ENCODE measurements at regions of chr20 and their contacts with region 1.

Region 1: DNA sequence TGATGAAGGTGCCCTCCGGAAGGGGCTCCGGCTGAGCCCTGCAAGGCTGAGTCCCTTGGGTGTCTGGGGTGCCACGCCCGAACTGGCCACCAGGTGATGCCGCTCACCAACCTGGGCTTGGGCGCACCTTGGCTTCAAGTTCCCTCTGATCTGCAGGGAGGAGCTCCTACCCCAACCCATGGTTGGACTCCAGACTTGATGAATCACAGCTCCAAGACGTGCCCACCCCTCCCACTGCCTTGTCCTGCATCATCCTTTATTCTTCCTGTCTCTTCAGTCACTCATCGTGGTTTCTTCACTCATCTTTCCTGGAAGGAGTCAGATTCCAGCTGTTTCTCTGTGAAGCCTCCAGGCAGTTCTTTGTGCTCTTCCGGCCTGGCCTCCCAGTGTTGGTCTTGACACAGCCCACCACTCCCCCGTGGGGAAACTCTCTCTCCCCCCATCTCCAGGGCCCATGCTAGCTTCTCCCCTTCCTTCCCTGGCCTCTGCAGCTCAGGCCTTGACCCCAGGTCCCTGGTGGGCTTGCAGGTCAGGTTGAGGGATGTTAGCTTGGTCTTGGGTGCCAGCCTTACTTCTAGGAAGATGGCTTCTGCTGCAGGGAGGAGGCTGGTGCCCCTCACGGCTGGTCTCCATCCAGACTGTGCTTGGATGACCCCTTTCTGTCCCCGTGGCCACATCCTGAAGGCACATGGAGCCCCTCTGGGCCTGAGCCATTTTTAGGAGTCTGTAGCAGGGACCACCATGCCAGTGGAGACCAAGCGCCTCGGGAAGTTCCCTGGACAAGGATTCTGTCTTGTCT is 2.6 kb upstream of the ZBP1 start:
- DNase-seq: peak; percentile 65 to 85 (median 74)
- ATAC-seq: peak; percentile 53
- H3K4me3 ChIP-seq: no peak overlapping the region
- H3K4me3 Mint-ChIP-seq: peak overlapping the region; percentile 87
- H3K27ac ChIP-seq: no peak overlapping the region
- H3K27ac Mint-ChIP-seq: peak overlapping the region; percentile 84
- H3K4me1 ChIP-seq: peaks cover 71% of the 10 kb centered on the region
- H3K4me1 Mint-ChIP-seq: peaks cover 88% of the 10 kb centered on the region
- H3K27me3 ChIP-seq: no peaks in the 10 kb centered on the region
- H3K27me3 Mint-ChIP-seq: no peaks in the 10 kb centered on the region
- CTCF ChIP-seq: peak; percentile 73

Region 2: GRCh38 chr20:57548177-57549058 is 74.4 kb before region 1 on chr20:
- CTCF ChIA-PET with region 1: no interaction called
- POLR2A ChIA-PET with region 1: no interaction called
- intact Hi-C with region 1: no loop called
- DNase-seq: no peak
- ATAC-seq: no peak
- H3K4me3 ChIP-seq: no peak overlapping the region
- H3K4me3 Mint-ChIP-seq: no peak overlapping the region
- H3K27ac ChIP-seq: no peak overlapping the region
- H3K27ac Mint-ChIP-seq: no peak overlapping the region
- H3K4me1 ChIP-seq: no peaks in the 10 kb centered on the region
- H3K4me1 Mint-ChIP-seq: no peaks in the 10 kb centered on the region
- H3K27me3 ChIP-seq: peaks cover 0 to 2% of the 10 kb centered on the region in 2 experiments
- H3K27me3 Mint-ChIP-seq: peaks cover 23% of the 10 kb centered on the region
- CTCF ChIP-seq: no peak

Region 3: DNA sequence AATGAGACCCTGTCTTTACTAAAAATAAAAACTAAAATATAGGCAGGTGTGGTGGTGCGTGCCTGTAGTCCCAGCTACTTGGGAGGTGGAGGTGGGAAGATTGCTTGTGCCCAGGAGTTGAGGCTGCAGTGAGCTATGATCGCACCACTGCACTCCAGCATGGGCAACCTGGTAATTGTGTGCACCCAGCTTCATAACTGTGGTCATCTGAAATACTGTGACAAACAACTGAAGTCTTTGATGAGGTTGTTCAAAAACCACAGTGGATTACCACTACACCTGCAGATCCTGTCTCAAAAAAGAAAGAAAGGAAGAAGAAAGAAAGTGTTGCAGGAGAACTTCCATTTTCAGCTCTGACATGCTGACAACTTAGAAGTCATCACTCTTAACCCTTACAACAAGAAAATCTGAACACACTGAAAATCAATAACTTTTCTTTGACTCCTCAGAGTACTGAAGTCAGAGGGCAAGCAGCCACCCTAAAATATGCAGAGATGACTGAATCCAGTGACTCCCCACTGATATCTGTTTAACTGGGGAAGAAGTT is 11.2 kb after region 1 on chr20:
- CTCF ChIA-PET with region 1: interaction called, 13 read pairs
- POLR2A ChIA-PET with region 1: interaction called, 139 read pairs
- intact Hi-C with region 1: no loop called
- DNase-seq: peak in 4 of 14 experiments; percentile 25 to 74 (median 64)
- ATAC-seq: peak; percentile 40
- H3K4me3 ChIP-seq: no peak overlapping the region
- H3K4me3 Mint-ChIP-seq: peak overlapping the region; percentile 6
- H3K27ac ChIP-seq: no peak overlapping the region
- H3K27ac Mint-ChIP-seq: no peak overlapping the region
- H3K4me1 ChIP-seq: peaks cover 28% of the 10 kb centered on the region
- H3K4me1 Mint-ChIP-seq: peaks cover 56% of the 10 kb centered on the region
- H3K27me3 ChIP-seq: no peaks in the 10 kb centered on the region
- H3K27me3 Mint-ChIP-seq: no peaks in the 10 kb centered on the region
- CTCF ChIP-seq: no peak

Region 4: DNA sequence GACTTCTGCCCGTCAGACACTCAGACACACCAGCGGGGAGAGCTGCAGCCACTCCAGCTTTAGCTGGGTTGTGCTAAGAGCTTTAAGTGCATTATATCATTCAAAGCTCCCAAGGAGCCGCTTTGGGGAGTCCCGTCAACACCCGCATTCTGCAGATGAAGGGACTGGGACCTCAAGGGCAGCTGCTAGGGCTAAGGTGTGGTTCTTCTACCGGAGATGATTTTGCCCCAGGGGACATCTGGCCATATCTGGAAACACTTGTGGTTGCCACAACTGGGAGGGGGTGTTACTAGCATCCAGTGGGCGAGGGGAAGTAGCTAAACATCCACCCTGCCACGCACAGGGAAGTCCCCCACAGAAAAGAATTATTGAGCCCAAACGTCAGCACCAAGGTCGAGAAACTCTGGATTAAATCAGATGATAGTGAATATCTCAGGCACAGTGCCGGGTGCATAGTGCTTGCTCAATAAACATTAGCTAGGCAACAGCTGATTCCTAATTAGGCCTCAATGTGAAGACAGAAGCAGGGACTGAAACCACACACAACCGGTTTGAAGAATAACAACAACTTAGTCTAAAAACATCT is 57.4 kb after region 1 on chr20:
- CTCF ChIA-PET with region 1: interaction called, 11 read pairs
- POLR2A ChIA-PET with region 1: interaction called, 8 read pairs
- intact Hi-C with region 1: no loop called
- DNase-seq: peak in 2 of 14 experiments; percentile 38 to 49
- ATAC-seq: no peak
- H3K4me3 ChIP-seq: no peak overlapping the region
- H3K4me3 Mint-ChIP-seq: no peak overlapping the region
- H3K27ac ChIP-seq: no peak overlapping the region
- H3K27ac Mint-ChIP-seq: no peak overlapping the region
- H3K4me1 ChIP-seq: peaks cover 15% of the 10 kb centered on the region
- H3K4me1 Mint-ChIP-seq: peaks cover 35% of the 10 kb centered on the region
- H3K27me3 ChIP-seq: peaks cover 0 to 2% of the 10 kb centered on the region in 2 experiments
- H3K27me3 Mint-ChIP-seq: no peaks in the 10 kb centered on the region
- CTCF ChIP-seq: no peak

Measured in CD4-positive, alpha-beta T cell (primary cell).